OCI-LY7 (cell line): ENCODE measurements at regions of chr3 and their contacts with region 1.

Region 1: DNA sequence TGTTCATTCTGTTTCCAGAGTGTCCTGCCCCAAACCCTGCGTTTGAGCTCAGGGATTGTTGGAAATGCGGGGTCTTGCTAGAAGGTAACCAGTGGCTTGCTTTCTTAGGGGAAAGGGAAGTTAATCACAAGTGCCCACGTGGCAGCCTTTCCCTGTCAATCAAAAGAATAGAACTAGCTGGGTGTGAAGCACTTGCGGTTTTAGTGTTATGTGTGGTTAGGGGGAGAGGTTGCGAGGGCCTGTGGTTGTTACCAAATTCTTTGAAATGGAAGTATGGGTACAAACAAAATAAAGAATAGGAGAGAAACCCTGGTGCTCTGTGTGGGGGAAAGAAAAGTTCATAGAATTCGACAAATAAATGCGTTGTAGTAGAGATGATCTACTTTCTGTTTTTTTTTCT is 67.6 kb downstream of the FNDC3B start:
- DNase-seq: peak; percentile 92
- H3K4me3 ChIP-seq: peak overlapping the region; percentile 48
- H3K27ac ChIP-seq: peak overlapping the region; percentile 71
- H3K4me1 ChIP-seq: peaks cover 68% of the 10 kb centered on the region
- CTCF ChIP-seq: no peak

Region 2: DNA sequence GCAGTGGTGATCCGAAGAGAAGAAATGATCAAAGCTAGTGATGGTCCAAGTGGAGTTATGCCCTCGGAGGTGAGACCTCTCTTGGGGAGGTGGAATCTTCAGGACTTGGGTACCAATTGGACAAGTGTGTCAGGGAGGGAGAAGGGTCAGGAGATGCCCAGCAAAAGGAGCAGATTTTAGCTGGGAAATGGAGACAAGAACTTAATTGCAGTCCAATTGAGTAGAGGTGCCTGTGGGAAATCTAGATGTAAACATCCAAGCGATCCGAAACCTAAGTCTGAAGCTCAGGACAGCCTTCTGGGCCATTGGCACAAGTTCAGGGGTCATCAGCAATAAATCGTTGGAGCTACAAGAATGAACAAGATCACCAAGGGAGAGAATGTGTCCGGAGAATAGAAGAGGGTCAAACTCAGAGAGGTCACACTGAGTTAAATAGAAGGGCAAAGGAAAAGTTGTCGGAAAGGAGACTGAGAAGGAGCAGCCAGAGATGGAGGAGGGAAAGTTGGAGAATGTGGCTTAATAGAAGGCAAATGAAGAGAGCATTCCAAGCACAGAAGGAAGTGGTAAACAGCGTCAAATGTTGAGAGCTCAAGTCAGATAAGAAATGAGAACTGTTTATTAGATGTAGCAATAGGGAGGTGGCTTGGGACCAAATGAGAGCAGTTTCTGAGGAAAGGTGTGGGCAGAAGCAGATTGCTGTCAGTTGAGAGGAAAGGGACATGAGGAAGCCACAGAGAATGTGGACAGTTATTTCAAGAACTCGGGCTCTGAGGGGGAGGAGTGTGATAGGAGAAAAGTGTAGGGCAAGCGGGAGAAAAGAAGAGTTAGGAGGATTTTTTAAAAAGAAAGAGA is 131.8 kb before region 1 on chr3:
- CTCF ChIA-PET with region 1: no interaction called
- POLR2A ChIA-PET with region 1: no interaction called
- intact Hi-C with region 1: loop called (anchors 5 kb)
- DNase-seq: no peak
- H3K4me3 ChIP-seq: no peak overlapping the region
- H3K27ac ChIP-seq: no peak overlapping the region
- H3K4me1 ChIP-seq: peaks cover 14% of the 10 kb centered on the region
- CTCF ChIP-seq: no peak

Region 3: GRCh38 chr3:172044833-172045585 is 62.0 kb before region 1 on chr3:
- CTCF ChIA-PET with region 1: interaction called, 4 read pairs
- POLR2A ChIA-PET with region 1: interaction called, 17 read pairs
- intact Hi-C with region 1: no loop called
- DNase-seq: no peak
- H3K4me3 ChIP-seq: no peak overlapping the region
- H3K27ac ChIP-seq: no peak overlapping the region
- H3K4me1 ChIP-seq: peaks cover 5% of the 10 kb centered on the region
- CTCF ChIP-seq: no peak

Region 4: GRCh38 chr3:172061724-172062184 is 45.2 kb before region 1 on chr3:
- CTCF ChIA-PET with region 1: no interaction called
- POLR2A ChIA-PET with region 1: interaction called, 10 read pairs
- intact Hi-C with region 1: loop called (anchors 2 kb)
- DNase-seq: peak; percentile 71
- H3K4me3 ChIP-seq: peak overlapping the region; percentile 55
- H3K27ac ChIP-seq: peak overlapping the region; percentile 81
- H3K4me1 ChIP-seq: peaks cover 57% of the 10 kb centered on the region
- CTCF ChIP-seq: no peak

Region 5: GRCh38 chr3:172138795-172139441 is 31.9 kb after region 1 on chr3:
- CTCF ChIA-PET with region 1: no interaction called
- POLR2A ChIA-PET with region 1: interaction called, 35 read pairs
- intact Hi-C with region 1: loop called (anchors 1 kb)
- DNase-seq: no peak
- H3K4me3 ChIP-seq: no peak overlapping the region
- H3K27ac ChIP-seq: no peak overlapping the region
- H3K4me1 ChIP-seq: peaks cover 33% of the 10 kb centered on the region
- CTCF ChIP-seq: no peak

Region 6: GRCh38 chr3:172332256-172333041 is 225.5 kb after region 1 on chr3:
- CTCF ChIA-PET with region 1: no interaction called
- POLR2A ChIA-PET with region 1: no interaction called
- intact Hi-C with region 1: loop called (anchors 5 kb)
- DNase-seq: peak; percentile 57
- H3K4me3 ChIP-seq: no peak overlapping the region
- H3K27ac ChIP-seq: no peak overlapping the region
- H3K4me1 ChIP-seq: no peaks in the 10 kb centered on the region
- CTCF ChIP-seq: peak; percentile 95

Region 7: GRCh38 chr3:173719585-173719984 is 1612.6 kb after region 1 on chr3:
- CTCF ChIA-PET with region 1: no interaction called
- POLR2A ChIA-PET with region 1: no interaction called
- intact Hi-C with region 1: no loop called
- DNase-seq: no peak
- H3K4me3 ChIP-seq: no peak overlapping the region
- H3K27ac ChIP-seq: no peak overlapping the region
- H3K4me1 ChIP-seq: no peaks in the 10 kb centered on the region
- CTCF ChIP-seq: no peak